ENCODE measurements at regions of chr4 and their contacts with region 1.

Region 1: DNA sequence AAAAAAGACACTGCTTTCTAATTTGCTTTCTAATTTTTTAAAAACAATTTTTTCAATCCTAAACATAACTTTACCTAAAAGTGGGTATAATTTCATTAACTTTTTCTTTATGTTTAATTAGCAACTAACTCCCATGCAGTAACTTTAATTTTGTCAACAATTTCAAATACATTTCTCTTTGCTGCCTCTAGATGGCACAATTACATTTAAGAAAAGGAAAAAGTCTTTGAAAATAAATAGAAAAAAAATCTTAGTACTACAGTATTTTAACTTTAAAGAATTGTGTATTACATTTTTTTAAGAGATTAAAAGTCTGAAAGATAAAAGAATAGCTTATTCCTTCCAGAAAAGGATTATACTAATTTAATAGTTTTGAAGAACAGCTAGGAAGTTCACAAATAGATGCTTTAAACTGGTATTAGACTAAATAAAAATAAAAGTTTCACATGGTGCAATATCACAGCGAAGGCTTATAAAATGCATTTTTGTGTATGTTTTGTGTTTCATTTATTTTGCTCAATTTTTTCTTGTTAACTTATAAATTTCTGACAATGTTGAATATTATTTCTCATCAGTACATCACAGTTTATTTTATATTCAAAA is 105.1 kb downstream of the ADGRA3 start:
- DNase-seq: no peak

Region 2: GRCh38 chr4:22607382-22607781 is 196.6 kb after region 1 on chr4:
- intact Hi-C with region 1: loop called (anchors 2 kb)
- DNase-seq: peak in 3 of 10 donors; percentile 20 to 78 (median 76)

Region 3: GRCh38 chr4:22688236-22688635 is 277.5 kb after region 1 on chr4:
- intact Hi-C with region 1: loop called (anchors 2 kb)
- DNase-seq: no peak